Natural killer cell (primary cell): ENCODE measurements at regions of chr17 and their contacts with region 1.

Region 1: GRCh38 chr17:8785547-8786413 is 13.4 kb downstream of the MFSD6L start:
- DNase-seq: peak; percentile 60 to 73
- ATAC-seq: peak in 2 of 3 donors; percentile 68 to 69
- H3K4me3 ChIP-seq: no peak overlapping the region
- H3K4me3 Mint-ChIP-seq: no peak overlapping the region
- H3K27ac ChIP-seq: no peak overlapping the region
- H3K27ac Mint-ChIP-seq: no peak overlapping the region
- H3K4me1 ChIP-seq: peaks cover 5% of the 10 kb centered on the region
- H3K4me1 Mint-ChIP-seq: peaks cover 10 to 15% of the 10 kb centered on the region in 2 donors
- H3K27me3 ChIP-seq: no peaks in the 10 kb centered on the region
- H3K27me3 Mint-ChIP-seq: peaks cover 11 to 15% of the 10 kb centered on the region in 2 donors
- CTCF ChIP-seq: peak; percentile 89

Region 2: DNA sequence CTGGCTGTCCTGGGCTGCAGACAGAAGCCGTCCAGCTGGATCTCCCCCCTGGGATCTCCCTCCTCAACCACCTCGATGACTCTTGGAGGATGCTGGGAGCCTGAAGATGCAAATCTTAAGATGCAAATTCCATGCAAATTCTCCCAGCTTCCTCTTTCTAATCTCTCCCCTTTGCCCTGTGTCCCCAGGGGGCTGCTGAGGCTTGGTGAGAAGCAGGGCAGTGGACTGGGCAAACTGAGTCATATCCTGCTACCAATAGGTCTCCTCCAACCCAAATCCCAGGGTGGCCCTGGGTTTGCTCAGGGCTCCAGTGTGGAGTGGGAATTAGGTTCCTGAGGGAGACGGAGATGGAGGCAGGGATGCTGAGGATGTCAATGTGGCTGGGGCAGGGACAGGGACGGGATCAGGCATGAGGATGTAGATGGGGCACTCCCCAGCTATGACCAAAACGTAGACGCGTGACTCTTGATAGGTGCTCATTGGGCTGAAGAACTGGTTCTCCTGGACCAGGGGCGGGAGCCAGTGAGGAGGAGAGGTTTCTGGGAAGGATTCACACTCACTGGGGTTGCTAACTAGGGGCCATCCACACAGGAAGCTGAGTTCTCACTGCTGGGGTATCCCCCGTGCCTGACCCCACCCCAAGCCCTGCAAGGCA is 694.6 kb before region 1 on chr17:
- intact Hi-C with region 1: loop called (anchors 10 kb)
- DNase-seq: no peak
- ATAC-seq: no peak
- H3K4me3 ChIP-seq: no peak overlapping the region
- H3K4me3 Mint-ChIP-seq: no peak overlapping the region
- H3K27ac ChIP-seq: no peak overlapping the region
- H3K27ac Mint-ChIP-seq: no peak overlapping the region
- H3K4me1 ChIP-seq: peaks cover 10% of the 10 kb centered on the region
- H3K4me1 Mint-ChIP-seq: peaks cover 4% of the 10 kb centered on the region in 2 donors
- H3K27me3 ChIP-seq: no peaks in the 10 kb centered on the region
- H3K27me3 Mint-ChIP-seq: peaks cover 23 to 38% of the 10 kb centered on the region in 2 donors
- CTCF ChIP-seq: no peak

Region 3: DNA sequence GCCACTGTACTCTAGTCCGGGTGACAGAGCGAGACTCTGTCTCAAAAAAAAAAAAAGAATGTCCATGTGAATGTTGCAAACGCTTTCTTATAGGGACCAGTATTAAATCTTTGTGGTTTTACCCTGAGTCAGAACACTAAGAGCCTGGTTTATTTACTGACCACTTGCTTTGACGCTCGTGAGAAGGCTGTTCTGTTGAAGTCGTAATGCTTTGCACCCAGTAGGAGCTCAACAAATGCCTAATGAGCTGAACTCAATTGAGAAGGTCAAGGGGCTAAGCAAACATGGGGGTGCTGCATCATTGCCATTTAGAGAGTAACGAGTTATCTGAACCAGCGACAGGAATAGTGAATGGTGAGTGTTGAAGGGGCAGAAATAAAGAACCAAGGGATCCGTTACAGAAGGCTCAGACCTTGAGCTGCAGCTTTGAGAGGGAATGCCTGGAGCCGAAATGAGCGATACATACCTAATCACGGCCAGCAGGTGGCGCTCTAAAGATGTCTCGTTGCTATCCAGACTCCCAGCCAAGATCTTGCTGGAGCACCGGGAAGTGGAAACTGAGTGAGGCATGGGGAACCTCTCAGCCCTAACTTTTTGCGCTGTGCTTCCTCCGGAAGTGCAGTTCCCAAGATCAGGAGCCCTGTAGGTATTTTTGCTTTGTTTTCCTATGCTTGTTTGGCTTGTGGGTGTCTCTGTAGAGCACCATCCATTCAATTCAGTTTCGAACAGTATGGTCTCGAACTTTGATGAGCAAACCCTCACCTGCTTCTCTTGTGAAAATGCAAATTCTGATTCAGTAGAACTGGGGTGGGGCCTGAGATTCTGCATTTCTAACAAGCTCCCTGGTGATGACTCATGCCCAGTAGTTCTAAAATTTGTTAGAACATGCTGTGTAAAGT is 375.6 kb before region 1 on chr17:
- intact Hi-C with region 1: loop called (anchors 2 kb)
- DNase-seq: peak; percentile 72 to 91
- ATAC-seq: peak; percentile 71 to 91 (median 88)
- H3K4me3 ChIP-seq: no peak overlapping the region
- H3K4me3 Mint-ChIP-seq: no peak overlapping the region
- H3K27ac ChIP-seq: no peak overlapping the region
- H3K27ac Mint-ChIP-seq: no peak overlapping the region
- H3K4me1 ChIP-seq: peaks cover 6% of the 10 kb centered on the region
- H3K4me1 Mint-ChIP-seq: peaks cover 6 to 9% of the 10 kb centered on the region in 2 donors
- H3K27me3 ChIP-seq: peaks cover 6% of the 10 kb centered on the region
- H3K27me3 Mint-ChIP-seq: peaks cover 11 to 12% of the 10 kb centered on the region in 2 donors
- CTCF ChIP-seq: peak; percentile 92

Region 4: GRCh38 chr17:8798846-8799569 is 13.2 kb after region 1 on chr17 and contains the start of gene MFSD6L:
- intact Hi-C with region 1: no loop called
- DNase-seq: peak in 1 of 2 donors; percentile 11
- ATAC-seq: no peak
- H3K4me3 ChIP-seq: no peak within 1 kb of the TSS
- H3K4me3 Mint-ChIP-seq: no peak within 1 kb of the TSS
- H3K27ac ChIP-seq: no peak within 1 kb of the TSS
- H3K27ac Mint-ChIP-seq: no peak within 1 kb of the TSS
- H3K4me1 ChIP-seq: no peaks in the 10 kb centered on the region
- H3K4me1 Mint-ChIP-seq: no peaks in the 10 kb centered on the region
- H3K27me3 ChIP-seq: no peaks in the 10 kb centered on the region
- H3K27me3 Mint-ChIP-seq: peaks cover 0 to 2% of the 10 kb centered on the region in 2 donors
- CTCF ChIP-seq: no peak
- total RNA-seq, gene MFSD6L: 0.12 to 0.90 TPM in 2 of 3 donors, not detected in the other

Region 5: GRCh38 chr17:8867361-8867981 is 81.7 kb after region 1 on chr17 and contains the start of gene PIK3R6:
- intact Hi-C with region 1: no loop called
- DNase-seq: peak in 1 of 2 donors; percentile 51
- ATAC-seq: peak; percentile 80 to 88 (median 82)
- H3K4me3 ChIP-seq: peak within 1 kb of the TSS; percentile 22
- H3K4me3 Mint-ChIP-seq: peak within 1 kb of the TSS; percentile 78
- H3K27ac ChIP-seq: no peak within 1 kb of the TSS
- H3K27ac Mint-ChIP-seq: peak within 1 kb of the TSS; percentile 29 to 71
- H3K4me1 ChIP-seq: peaks cover 47% of the 10 kb centered on the region
- H3K4me1 Mint-ChIP-seq: peaks cover 21 to 33% of the 10 kb centered on the region in 2 donors
- H3K27me3 ChIP-seq: no peaks in the 10 kb centered on the region
- H3K27me3 Mint-ChIP-seq: peaks cover 0 to 3% of the 10 kb centered on the region in 2 donors
- CTCF ChIP-seq: no peak
- total RNA-seq, gene PIK3R6: 0.84 to 6.3 (median 1.4) TPM

Region 6: GRCh38 chr17:8997994-8998628 is 212.3 kb after region 1 on chr17:
- intact Hi-C with region 1: loop called (anchors 10 kb)
- DNase-seq: peak; percentile 79 to 91
- ATAC-seq: peak; percentile 84 to 92 (median 85)
- H3K4me3 ChIP-seq: no peak overlapping the region
- H3K4me3 Mint-ChIP-seq: no peak overlapping the region
- H3K27ac ChIP-seq: no peak overlapping the region
- H3K27ac Mint-ChIP-seq: no peak overlapping the region
- H3K4me1 ChIP-seq: peaks cover 4% of the 10 kb centered on the region
- H3K4me1 Mint-ChIP-seq: peaks cover 5 to 13% of the 10 kb centered on the region in 2 donors
- H3K27me3 ChIP-seq: peaks cover 5% of the 10 kb centered on the region
- H3K27me3 Mint-ChIP-seq: peaks cover 27 to 28% of the 10 kb centered on the region in 2 donors
- CTCF ChIP-seq: peak; percentile 100